Naive thymus-derived CD4-positive, alpha-beta T cell (primary cell): ENCODE measurements at regions of chrX and their contacts with region 1.

Region 1: DNA sequence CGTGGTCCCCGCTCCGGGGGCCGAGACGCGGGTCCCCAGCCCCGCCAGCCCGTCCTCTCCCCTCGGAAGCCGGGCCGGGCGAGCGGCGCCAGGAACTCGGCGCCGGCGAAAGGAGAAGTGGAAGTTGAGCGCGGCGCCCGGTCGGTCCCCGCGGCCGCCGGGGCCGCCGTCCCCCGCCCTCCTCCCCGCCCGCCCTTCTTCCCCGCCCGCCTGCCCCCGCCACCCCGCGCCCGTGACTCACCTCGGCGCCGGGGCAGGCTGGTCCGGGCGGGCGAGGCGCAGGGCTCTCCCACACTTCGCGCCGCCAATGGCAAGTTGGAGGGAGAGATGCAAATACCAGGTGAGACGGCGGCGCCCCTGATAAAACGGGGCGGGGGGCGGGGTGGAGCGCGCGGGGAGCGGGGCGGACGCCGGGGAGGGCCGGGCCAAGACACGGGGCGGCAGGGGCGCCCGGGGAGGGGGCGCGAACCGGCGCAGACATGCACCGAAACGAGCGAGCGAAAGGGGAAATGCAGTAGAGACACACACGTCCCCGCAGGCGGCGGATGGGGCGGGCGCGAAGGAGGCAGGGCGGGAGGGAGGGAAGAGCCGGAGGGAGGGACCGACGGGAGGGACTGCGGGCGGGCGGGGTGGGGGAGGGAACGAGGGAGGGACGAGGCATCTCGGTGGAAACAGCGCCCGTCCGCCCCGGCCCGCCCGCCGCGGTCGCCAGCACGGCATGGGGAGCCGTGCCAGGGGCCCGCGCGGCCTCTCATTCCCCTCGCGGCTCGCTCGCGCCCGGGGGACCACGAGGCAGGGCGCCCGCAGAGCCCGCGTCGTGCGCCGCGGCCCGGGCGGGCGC is at the start of gene ELF4:
- DNase-seq: peak in 7 of 9 donors; percentile 25 to 60 (median 34)
- ATAC-seq: peak; percentile 78
- H3K4me3 ChIP-seq: peak within 1 kb of the TSS; percentile 57
- H3K4me3 Mint-ChIP-seq: peak within 1 kb of the TSS; percentile 79 to 96 (median 90)
- H3K27ac ChIP-seq: peak within 1 kb of the TSS; percentile 77
- H3K27ac Mint-ChIP-seq: peak within 1 kb of the TSS; percentile 41 to 89 (median 75)
- H3K4me1 ChIP-seq: peaks cover 5% of the 10 kb centered on the region in 2 donors
- H3K4me1 Mint-ChIP-seq: peaks cover 10 to 36% (median 31%) of the 10 kb centered on the region in 7 donors
- H3K27me3 ChIP-seq: no peaks in the 10 kb centered on the region
- H3K27me3 Mint-ChIP-seq: no peaks in the 10 kb centered on the region
- total RNA-seq, gene ELF4: 20.7 to 48.9 (median 23.7) TPM

Region 2: DNA sequence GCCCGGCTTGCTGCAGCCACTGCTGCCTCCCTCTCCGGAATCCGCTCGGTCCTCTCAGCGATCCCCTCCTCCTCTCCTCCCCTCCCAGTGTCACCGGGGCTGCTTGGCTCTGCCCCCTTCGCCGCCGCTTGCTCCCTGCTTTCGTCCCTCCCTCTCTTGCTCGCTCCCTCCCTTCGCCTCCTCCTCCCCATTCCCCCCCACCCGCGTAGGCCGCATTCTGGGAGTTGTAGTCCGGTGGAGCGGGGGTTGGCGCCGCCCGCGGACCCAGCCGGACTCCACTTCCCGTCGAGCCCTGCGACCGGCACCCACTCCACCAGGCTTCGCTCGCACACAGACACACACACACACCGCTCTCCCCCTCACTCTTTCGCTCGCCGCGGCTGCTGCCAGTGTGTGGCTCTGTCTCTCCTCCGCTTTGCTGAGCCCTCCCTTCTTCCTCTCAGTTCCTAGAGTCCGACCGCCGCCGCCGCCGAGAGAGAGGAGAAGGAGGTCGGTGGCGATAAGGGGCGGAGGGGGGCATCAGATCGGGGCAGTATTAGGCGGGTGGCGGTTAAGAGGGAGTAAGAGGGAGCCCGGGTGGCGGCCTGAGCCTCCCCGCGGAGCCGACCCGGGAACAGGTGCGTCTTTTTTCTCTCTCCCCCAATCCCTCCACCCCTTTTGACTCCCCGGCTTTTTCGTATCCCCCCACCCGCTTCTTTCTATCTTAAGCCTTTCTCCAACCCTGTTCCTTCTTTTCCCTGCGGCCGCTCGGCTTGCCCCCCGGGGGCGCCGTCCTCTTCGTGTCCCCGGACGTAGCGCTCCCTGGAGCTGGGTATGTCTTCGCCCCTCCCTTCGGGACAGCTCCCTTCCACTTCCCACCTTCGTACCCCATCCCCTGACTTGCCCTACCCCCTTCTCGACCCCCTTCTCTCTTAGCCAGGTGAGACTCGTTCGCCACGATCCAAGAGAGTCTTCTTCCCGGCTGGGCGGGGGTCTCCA is 128.0 kb before region 1 on chrX and contains the start of gene BCORL1:
- CTCF ChIA-PET with region 1: no interaction called
- POLR2A ChIA-PET with region 1: no interaction called
- intact Hi-C with region 1: loop called in 1 of 2 experiments (anchors 5 kb)
- DNase-seq: peak; percentile 62 to 89 (median 84)
- ATAC-seq: peak; percentile 96
- H3K4me3 ChIP-seq: peak within 1 kb of the TSS; percentile 61
- H3K4me3 Mint-ChIP-seq: peak within 1 kb of the TSS in 1 of 10 donors; percentile 85
- H3K27ac ChIP-seq: no peak within 1 kb of the TSS
- H3K27ac Mint-ChIP-seq: peak within 1 kb of the TSS in 7 of 9 donors; percentile 31 to 82 (median 59)
- H3K4me1 ChIP-seq: no peaks in the 10 kb centered on the region
- H3K4me1 Mint-ChIP-seq: peaks cover 19 to 34% (median 27%) of the 10 kb centered on the region in 7 donors
- H3K27me3 ChIP-seq: no peaks in the 10 kb centered on the region
- H3K27me3 Mint-ChIP-seq: peaks cover 0 to 30% (median 0%) of the 10 kb centered on the region in 5 donors
- total RNA-seq, gene BCORL1: 5.8 to 8.9 (median 8.2) TPM

Region 3: DNA sequence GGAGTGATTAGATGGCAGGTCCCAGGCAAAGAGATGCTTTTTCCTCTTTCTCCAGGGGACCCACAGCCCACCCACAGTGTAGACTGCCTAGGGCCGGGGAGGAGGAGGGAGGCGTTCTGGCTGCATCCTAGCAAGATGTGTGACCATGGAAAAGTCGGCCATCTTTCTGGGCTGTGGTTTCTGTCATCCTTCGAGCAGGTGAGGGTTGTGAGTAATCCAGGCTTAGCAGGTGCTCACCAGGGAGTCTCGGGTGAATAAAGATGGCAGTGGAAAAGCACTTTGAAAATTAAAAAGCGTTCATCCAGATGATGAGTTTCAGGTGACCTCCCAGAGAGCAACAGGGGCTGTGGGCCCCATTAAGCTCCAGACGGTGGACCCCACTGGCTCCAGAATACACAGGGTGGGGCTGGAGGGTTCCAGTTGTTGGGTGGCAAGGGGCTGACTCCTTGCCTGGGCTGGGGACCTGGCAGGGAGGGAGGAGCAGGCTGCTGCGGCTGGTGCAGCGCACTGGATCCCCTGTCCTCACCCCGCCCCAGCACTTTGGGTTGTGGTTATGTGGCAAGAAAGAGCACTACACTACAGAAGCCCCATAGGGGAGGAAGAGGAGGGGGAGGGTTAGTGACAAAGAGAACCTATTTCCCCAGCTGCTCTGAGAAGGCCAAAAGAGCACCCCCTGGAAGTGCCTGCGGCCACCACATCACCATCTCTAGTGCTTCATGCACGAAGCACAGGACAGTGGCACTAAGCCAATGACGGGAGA is 24.0 kb before region 1 on chrX:
- CTCF ChIA-PET with region 1: interaction called, 5 read pairs
- POLR2A ChIA-PET with region 1: interaction called, 10 read pairs
- intact Hi-C with region 1: loop called (anchors 1 kb)
- DNase-seq: peak in 8 of 9 donors; percentile 64 to 79 (median 74)
- ATAC-seq: peak; percentile 74
- H3K4me3 ChIP-seq: peak overlapping the region; percentile 67
- H3K4me3 Mint-ChIP-seq: peak overlapping the region; percentile 86 to 93 (median 89)
- H3K27ac ChIP-seq: peak overlapping the region; percentile 66
- H3K27ac Mint-ChIP-seq: peak overlapping the region; percentile 76 to 96 (median 91)
- H3K4me1 ChIP-seq: peaks cover 22 to 35% of the 10 kb centered on the region in 2 donors
- H3K4me1 Mint-ChIP-seq: peaks cover 15 to 71% (median 60%) of the 10 kb centered on the region in 7 donors
- H3K27me3 ChIP-seq: no peaks in the 10 kb centered on the region
- H3K27me3 Mint-ChIP-seq: no peaks in the 10 kb centered on the region

Region 4: GRCh38 chrX:130091958-130092522 is 18.6 kb before region 1 on chrX:
- CTCF ChIA-PET with region 1: interaction called, 4 read pairs
- POLR2A ChIA-PET with region 1: interaction called, 17 read pairs
- intact Hi-C with region 1: loop called (anchors 1 kb)
- DNase-seq: peak; percentile 46 to 91 (median 87)
- ATAC-seq: peak; percentile 98
- H3K4me3 ChIP-seq: peak overlapping the region; percentile 64
- H3K4me3 Mint-ChIP-seq: peak overlapping the region; percentile 74 to 92 (median 86)
- H3K27ac ChIP-seq: peak overlapping the region; percentile 68
- H3K27ac Mint-ChIP-seq: peak overlapping the region; percentile 89 to 97 (median 95)
- H3K4me1 ChIP-seq: peaks cover 44% of the 10 kb centered on the region in 2 donors
- H3K4me1 Mint-ChIP-seq: peaks cover 13 to 84% (median 52%) of the 10 kb centered on the region in 7 donors
- H3K27me3 ChIP-seq: no peaks in the 10 kb centered on the region
- H3K27me3 Mint-ChIP-seq: no peaks in the 10 kb centered on the region

Region 5: DNA sequence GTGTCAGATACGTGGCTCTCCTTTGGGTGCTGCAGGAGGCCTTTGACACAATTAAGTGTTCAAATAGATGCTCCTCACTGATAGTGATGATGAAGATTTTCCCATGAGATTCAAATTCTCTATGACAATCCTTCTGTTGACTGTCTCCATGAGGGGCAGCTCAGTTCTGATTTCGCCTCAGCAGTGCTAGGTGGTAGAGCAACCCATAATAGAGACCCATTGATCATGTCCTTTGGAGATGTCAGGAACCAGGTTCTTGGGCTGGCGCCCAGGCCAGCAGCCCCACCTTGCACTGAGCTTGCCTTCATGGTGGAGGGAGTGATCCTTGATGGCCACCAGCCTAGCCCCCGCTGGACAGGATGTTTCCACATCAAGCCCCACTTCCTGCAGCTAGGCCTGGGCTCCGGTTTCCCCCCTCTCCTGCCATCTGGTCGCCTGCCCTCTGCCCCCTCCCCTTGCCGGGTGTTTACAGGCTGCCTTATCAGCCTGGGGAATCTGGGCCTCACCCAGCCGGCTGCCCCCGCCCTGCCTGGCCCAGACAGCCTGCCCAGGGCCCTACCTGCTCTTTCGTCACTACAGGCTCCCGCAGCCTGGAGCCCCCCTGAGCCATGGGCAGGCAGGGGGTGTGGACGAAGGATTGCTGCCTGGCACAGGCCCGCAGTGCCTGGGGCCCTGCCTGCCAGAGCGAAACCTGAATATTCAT is 12.9 kb before region 1 on chrX:
- CTCF ChIA-PET with region 1: interaction called, 4 read pairs
- POLR2A ChIA-PET with region 1: interaction called, 17 read pairs
- intact Hi-C with region 1: loop called (anchors 1 kb)
- DNase-seq: peak in 3 of 9 donors; percentile 29 to 54 (median 37)
- ATAC-seq: peak; percentile 89
- H3K4me3 ChIP-seq: peak overlapping the region; percentile 4
- H3K4me3 Mint-ChIP-seq: peak overlapping the region; percentile 60 to 82 (median 66)
- H3K27ac ChIP-seq: peak overlapping the region; percentile 62
- H3K27ac Mint-ChIP-seq: peak overlapping the region; percentile 29 to 94 (median 89)
- H3K4me1 ChIP-seq: peaks cover 43 to 59% of the 10 kb centered on the region in 2 donors
- H3K4me1 Mint-ChIP-seq: peaks cover 17 to 86% (median 57%) of the 10 kb centered on the region in 7 donors
- H3K27me3 ChIP-seq: no peaks in the 10 kb centered on the region
- H3K27me3 Mint-ChIP-seq: no peaks in the 10 kb centered on the region